PC-3 (cell line): ENCODE measurements at regions of chr5 and their contacts with region 1.

Region 1: GRCh38 chr5:54895816-54896341 is 89.5 kb downstream of the ESM1 start:
- DNase-seq: peak; percentile 59
- ATAC-seq: peak; percentile 68
- H3K4me3 ChIP-seq: no peak overlapping the region
- H3K27ac ChIP-seq: no peak overlapping the region
- H3K4me1 ChIP-seq: no peaks in the 10 kb centered on the region
- H3K27me3 ChIP-seq: no peaks in the 10 kb centered on the region
- CTCF ChIP-seq: peak; percentile 60

Region 2: GRCh38 chr5:54766748-54767147 is 129.1 kb before region 1 on chr5:
- CTCF ChIA-PET with region 1: no interaction called
- POLR2A ChIA-PET with region 1: no interaction called
- intact Hi-C with region 1: no loop called
- DNase-seq: no peak
- ATAC-seq: no peak
- H3K4me3 ChIP-seq: no peak overlapping the region
- H3K27ac ChIP-seq: no peak overlapping the region
- H3K4me1 ChIP-seq: no peaks in the 10 kb centered on the region
- H3K27me3 ChIP-seq: no peaks in the 10 kb centered on the region
- CTCF ChIP-seq: peak; percentile 28; the same call in 1 of the 2 replicates

Region 3: GRCh38 chr5:54844905-54845566 is 50.8 kb before region 1 on chr5:
- CTCF ChIA-PET with region 1: interaction called, 10 read pairs
- POLR2A ChIA-PET with region 1: no interaction called
- intact Hi-C with region 1: no loop called
- DNase-seq: peak; percentile 62
- ATAC-seq: peak; percentile 50
- H3K4me3 ChIP-seq: peak overlapping the region; percentile 44; the same call in 1 of the 2 replicates
- H3K27ac ChIP-seq: no peak overlapping the region
- H3K4me1 ChIP-seq: no peaks in the 10 kb centered on the region
- H3K27me3 ChIP-seq: no peaks in the 10 kb centered on the region
- CTCF ChIP-seq: peak; percentile 67

Region 4: DNA sequence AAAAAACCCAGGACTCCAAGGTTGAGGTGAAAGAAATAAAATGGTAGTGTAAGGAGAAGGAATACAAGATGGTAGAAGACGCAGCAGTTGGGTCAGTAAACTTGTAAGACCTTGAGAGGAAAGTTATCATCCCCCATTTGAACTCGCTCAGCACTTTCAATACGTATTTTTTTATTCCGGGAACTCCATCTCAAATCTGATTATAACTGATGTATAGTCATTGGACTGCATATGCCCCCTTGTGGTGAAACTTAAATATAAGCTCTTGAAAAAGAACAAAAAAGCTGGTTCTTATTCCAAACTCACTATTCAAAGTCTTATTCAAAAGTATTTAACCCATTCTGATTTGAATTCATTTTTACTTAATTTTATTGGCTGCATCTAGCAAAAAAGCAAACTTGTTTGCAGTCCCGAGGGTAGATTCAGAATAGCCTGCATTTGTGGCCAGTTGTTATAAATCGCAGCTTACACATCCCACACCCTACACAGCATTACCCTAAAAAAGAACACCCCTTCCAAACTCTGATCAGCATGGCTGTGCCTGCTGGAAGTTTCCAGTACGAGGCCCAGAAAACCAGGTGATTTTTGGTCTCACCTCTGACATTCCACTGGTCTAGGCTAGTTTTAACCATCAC is 28.5 kb before region 1 on chr5:
- CTCF ChIA-PET with region 1: interaction called, 11 read pairs
- POLR2A ChIA-PET with region 1: no interaction called
- intact Hi-C with region 1: no loop called
- DNase-seq: peak; percentile 59
- ATAC-seq: no peak; the same call in 1 of the 2 replicates
- H3K4me3 ChIP-seq: peak overlapping the region; percentile 18; the same call in 1 of the 2 replicates
- H3K27ac ChIP-seq: no peak overlapping the region
- H3K4me1 ChIP-seq: no peaks in the 10 kb centered on the region
- H3K27me3 ChIP-seq: peaks cover 17% of the 10 kb centered on the region; the same call in 1 of the 2 replicates
- CTCF ChIP-seq: peak; percentile 60